Heart right ventricle (tissue), 16 donors: ENCODE measurements at regions of chr13 and their contacts with region 1.

Region 1: DNA sequence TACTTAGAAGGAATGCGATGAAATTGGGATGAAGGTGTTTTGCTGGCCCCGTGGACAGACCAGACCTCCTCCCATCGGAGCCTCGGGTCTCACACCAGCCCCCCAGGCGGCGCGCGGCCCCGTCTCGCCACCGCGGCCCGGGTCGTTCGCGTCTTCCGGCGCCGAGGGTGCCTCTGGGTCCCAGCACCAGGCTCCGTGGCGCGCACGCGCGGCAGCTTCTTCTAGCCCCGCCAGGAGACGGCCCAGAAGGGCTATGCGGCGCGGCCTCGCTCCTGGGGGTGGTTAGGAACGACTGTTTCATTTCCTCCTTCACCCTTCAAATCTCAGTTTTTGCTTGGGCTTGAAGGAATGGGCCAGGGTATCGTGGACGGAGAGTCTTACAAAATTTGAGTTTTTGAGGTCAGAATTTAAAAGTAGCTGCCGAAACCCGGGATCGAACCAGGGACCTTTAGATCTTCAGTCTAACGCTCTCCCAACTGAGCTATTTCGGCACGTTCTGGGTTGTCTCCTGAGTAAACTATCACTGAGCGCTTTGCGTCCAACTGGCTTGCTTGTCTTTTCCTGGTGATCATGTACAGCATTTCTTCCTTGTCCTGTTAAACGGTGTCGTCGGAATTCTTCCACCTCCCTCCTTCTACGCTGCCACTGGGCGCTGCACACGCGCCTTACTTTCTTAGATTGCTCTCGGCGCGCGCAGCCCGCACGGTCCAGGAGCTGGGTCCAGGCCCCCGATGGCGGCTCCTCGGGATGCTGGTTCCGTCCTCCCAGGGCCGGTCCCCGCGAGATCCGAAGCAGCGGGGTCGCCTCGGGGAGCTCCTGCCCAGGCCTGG is 46.5 kb downstream of the TGDS start:
- DNase-seq: peak; percentile 91 to 93
- ATAC-seq: peak; percentile 96 to 98 (median 98)
- H3K4me3 ChIP-seq: peak overlapping the region; percentile 46 to 85 (median 72)
- H3K27ac ChIP-seq: peak overlapping the region; percentile 79 to 96 (median 92)
- H3K4me1 ChIP-seq: peaks cover 0 to 19% (median 8%) of the 10 kb centered on the region in 9 donors
- H3K27me3 ChIP-seq: no peaks in the 10 kb centered on the region
- CTCF ChIP-seq: peak in 1 of 9 donors; percentile 3

Region 2: GRCh38 chr13:94595950-94596574 is 46.6 kb after region 1 on chr13 and contains the start of gene TGDS:
- intact Hi-C with region 1: loop called in 5 of 10 experiments (anchors 2 to 10 kb)
- DNase-seq: peak; percentile 91
- ATAC-seq: peak; percentile 99 to 100 (median 99)
- H3K4me3 ChIP-seq: peak within 1 kb of the TSS; percentile 26 to 98 (median 90)
- H3K27ac ChIP-seq: peak within 1 kb of the TSS in 9 of 10 donors; percentile 67 to 95 (median 85)
- H3K4me1 ChIP-seq: peaks cover 4 to 35% (median 21%) of the 10 kb centered on the region in 9 donors
- H3K27me3 ChIP-seq: no peaks in the 10 kb centered on the region
- CTCF ChIP-seq: peak in 4 of 9 donors; percentile 22 to 36 (median 31)
- total RNA-seq, gene TGDS: 3.3 to 5.8 (median 4.5) TPM

Region 3: GRCh38 chr13:94601446-94602431 is 52.3 kb after region 1 on chr13 and contains the start of gene GPR180:
- intact Hi-C with region 1: loop called in 5 of 10 experiments (anchors 2 to 10 kb)
- DNase-seq: peak; percentile 91 to 95
- ATAC-seq: peak; percentile 99 to 100 (median 100)
- H3K4me3 ChIP-seq: peak within 1 kb of the TSS; percentile 73 to 99 (median 93)
- H3K27ac ChIP-seq: peak within 1 kb of the TSS; percentile 32 to 89 (median 80)
- H3K4me1 ChIP-seq: peaks cover 0 to 14% (median 9%) of the 10 kb centered on the region in 9 donors
- H3K27me3 ChIP-seq: no peaks in the 10 kb centered on the region
- CTCF ChIP-seq: no peak
- total RNA-seq, gene GPR180: 2.1 to 5.2 (median 3.2) TPM